Aorta (tissue), 5 donors: ENCODE measurements at regions of chr9 and their contacts with region 1.

Region 1: DNA sequence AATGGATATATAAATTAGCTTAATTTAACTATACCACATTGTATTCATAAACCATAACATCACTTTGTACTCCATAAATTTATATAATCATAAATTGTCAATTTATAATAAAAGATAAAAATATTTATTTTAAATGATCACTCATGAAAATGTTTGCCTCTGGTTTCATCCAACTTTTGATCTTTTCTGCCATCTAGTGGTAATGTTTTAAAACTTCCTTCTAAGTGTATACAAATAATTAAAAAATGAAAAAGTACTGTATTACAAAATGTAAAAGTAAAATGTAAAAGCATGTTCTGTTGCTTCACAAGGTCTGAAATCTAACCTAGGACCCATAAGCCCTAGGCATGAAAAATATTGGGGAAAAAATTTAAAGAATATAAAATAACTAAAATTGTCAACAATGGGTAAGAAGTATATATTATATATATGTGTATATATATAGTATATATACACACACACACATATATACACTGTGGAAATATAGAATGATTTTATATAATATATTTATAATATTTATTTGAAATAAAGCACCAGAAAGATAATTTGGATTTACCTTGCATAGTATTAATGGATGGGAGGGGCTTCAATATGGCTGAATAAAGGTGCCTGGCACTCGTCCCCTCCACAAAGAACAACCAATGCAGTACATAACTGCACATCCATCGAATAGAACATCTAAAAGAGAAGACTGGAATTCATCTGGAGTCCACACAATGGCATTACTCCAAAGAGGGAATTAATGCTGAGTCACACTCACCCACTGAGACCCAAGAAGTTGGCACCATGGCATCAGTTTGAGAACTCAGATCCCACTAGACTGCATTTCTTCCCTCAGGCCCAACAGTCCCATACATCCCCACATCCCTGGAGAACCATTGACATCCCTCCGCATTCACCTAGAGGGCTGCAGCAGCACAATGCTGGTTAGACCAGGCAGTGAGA is 32.5 kb downstream of the ANXA1 start:
- DNase-seq: no peak
- ATAC-seq: no peak
- H3K4me3 ChIP-seq: no peak overlapping the region
- H3K27ac ChIP-seq: no peak overlapping the region
- H3K4me1 ChIP-seq: no peaks in the 10 kb centered on the region
- H3K27me3 ChIP-seq: no peaks in the 10 kb centered on the region

Region 2: GRCh38 chr9:72856972-72857623 is 327.1 kb before region 1 on chr9:
- intact Hi-C with region 1: loop called in 1 of 2 experiments (anchors 10 kb)
- DNase-seq: no peak
- ATAC-seq: peak; percentile 88
- H3K4me3 ChIP-seq: no peak overlapping the region
- H3K27ac ChIP-seq: no peak overlapping the region
- H3K4me1 ChIP-seq: peaks cover 2 to 11% of the 10 kb centered on the region in 2 donors
- H3K27me3 ChIP-seq: no peaks in the 10 kb centered on the region

Region 3: DNA sequence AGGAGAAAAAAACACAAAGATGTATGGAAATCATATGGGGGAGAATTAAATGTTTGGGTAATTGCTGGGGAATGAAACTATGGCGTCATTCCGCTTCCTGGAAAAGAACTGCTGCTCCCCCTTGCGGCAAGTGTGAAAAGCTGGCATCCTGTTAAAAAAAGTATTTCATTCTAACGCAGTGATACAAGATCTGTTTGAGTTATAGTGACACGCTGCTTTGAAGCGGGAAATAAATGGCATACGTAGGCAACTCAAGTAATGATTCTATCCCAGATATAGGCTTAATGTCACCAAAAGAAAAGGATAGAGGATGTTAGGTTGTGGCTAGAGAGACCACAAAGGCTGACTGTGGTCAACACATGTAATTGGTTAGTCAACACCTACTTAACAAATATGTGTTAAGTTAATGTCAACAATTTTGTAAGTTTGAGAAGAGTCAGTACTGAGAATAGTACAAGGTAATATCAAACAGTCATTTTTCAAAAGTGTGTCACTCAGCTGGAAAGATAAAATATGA is 161.1 kb before region 1 on chr9:
- intact Hi-C with region 1: loop called in 1 of 2 experiments (anchors 5 kb)
- DNase-seq: peak; percentile 61 to 74
- ATAC-seq: peak; percentile 87
- H3K4me3 ChIP-seq: no peak overlapping the region
- H3K27ac ChIP-seq: no peak overlapping the region
- H3K4me1 ChIP-seq: no peaks in the 10 kb centered on the region
- H3K27me3 ChIP-seq: no peaks in the 10 kb centered on the region

Region 4: GRCh38 chr9:73038613-73039012 is 145.6 kb before region 1 on chr9:
- intact Hi-C with region 1: loop called in 1 of 2 experiments (anchors 10 kb)
- DNase-seq: peak; percentile 54 to 72
- ATAC-seq: peak; percentile 81
- H3K4me3 ChIP-seq: no peak overlapping the region
- H3K27ac ChIP-seq: peak overlapping the region; percentile 67 to 97
- H3K4me1 ChIP-seq: peaks cover 0 to 10% of the 10 kb centered on the region in 2 donors
- H3K27me3 ChIP-seq: no peaks in the 10 kb centered on the region

Region 5: GRCh38 chr9:73104342-73104741 is 79.8 kb before region 1 on chr9:
- intact Hi-C with region 1: loop called (anchors 2 kb)
- DNase-seq: no peak
- ATAC-seq: no peak
- H3K4me3 ChIP-seq: no peak overlapping the region
- H3K27ac ChIP-seq: no peak overlapping the region
- H3K4me1 ChIP-seq: no peaks in the 10 kb centered on the region
- H3K27me3 ChIP-seq: no peaks in the 10 kb centered on the region